ENCODE measurements at regions of chr6 and their contacts with region 1.

Region 1: GRCh38 chr6:156776840-156777576 is at the start of gene ARID1B:
- DNase-seq: peak; percentile 87 to 93 (median 89)
- ATAC-seq: peak; percentile 62 to 85 (median 81)
- H3K4me3 ChIP-seq: peak within 1 kb of the TSS; percentile 67 to 97 (median 80)
- H3K27ac ChIP-seq: peak within 1 kb of the TSS; percentile 96 to 99 (median 98)
- H3K4me1 ChIP-seq: peaks cover 0 to 47% (median 30%) of the 10 kb centered on the region in 12 donors
- H3K27me3 ChIP-seq: no peaks in the 10 kb centered on the region
- CTCF ChIP-seq: no peak
- POLR2A ChIP-seq: peak in 1 of 2 donors; percentile 56
- total RNA-seq, gene ARID1B: 34.3 to 76.1 (median 53.9) TPM

Region 2: DNA sequence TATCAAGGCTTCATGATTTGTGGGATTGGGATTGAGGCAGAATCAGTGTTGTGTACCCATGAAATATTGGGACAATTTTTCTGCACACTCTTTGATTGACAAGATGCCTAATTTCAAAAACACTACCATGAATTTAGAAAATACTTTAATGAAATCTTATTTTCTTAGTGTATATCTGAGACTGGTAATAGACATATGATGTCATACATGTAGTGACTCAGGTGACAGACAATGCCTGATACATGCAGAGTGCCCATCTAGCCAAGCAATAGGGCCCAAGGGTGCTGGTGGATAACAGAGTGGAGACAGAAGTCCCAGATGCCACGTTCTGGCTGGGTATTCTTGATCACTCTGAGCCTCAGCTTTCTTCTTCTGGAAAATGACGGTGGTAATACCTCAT is 279.4 kb before region 1 on chr6:
- intact Hi-C with region 1: no loop called
- DNase-seq: no peak
- ATAC-seq: no peak
- H3K4me3 ChIP-seq: no peak overlapping the region
- H3K27ac ChIP-seq: no peak overlapping the region
- H3K4me1 ChIP-seq: no peaks in the 10 kb centered on the region
- H3K27me3 ChIP-seq: no peaks in the 10 kb centered on the region
- CTCF ChIP-seq: no peak
- POLR2A ChIP-seq: no peak

Region 3: DNA sequence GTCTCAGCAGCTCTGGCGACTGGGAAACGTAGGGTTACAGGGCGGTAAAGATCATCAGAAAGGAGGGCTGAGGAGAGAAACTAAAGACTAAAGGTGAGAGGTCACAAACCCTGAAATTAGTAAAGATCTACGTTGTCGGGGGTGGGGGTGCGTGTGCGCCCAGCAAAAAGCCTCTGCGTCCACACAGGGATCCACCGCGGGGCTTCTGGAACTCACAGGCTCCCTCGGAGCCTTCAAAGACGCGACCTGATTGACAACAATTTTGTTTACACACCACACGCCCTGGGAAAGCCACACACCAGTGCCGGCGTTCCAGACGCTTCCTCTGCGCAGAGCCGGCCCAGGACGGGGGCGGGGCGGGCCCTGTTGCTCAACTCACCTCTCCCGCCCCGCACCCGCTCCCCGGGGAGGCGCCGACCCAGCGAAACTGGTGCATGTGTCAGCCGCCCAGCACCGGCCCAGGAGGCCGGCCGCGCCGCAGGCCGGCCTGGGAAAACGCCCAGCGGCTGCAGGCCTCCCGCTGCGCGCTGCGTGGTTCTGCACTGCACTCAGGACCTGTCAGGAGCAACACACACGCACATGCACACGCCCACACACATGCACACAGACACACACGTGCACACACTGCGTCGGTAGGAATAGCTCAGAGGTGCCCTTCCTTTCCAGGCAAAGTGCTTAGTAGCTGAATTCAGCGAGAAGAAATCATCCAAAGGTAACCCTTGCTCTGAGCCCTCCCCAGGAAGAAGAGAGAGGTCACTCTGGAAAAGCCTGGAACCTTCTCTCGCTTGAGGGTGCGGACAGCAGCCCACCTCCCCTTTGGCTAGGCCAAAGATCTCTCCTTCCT is 57.1 kb before region 1 on chr6:
- intact Hi-C with region 1: loop called in 4 of 10 experiments (anchors 2 kb)
- DNase-seq: peak; percentile 94 to 98 (median 96)
- ATAC-seq: peak; percentile 96 to 100 (median 99)
- H3K4me3 ChIP-seq: peak overlapping the region in 10 of 12 donors; percentile 2 to 60 (median 44)
- H3K27ac ChIP-seq: peak overlapping the region; percentile 78 to 95 (median 88)
- H3K4me1 ChIP-seq: peaks cover 6 to 26% (median 21%) of the 10 kb centered on the region in 12 donors
- H3K27me3 ChIP-seq: no peaks in the 10 kb centered on the region
- CTCF ChIP-seq: peak in 1 of 12 donors; percentile 11
- POLR2A ChIP-seq: peak in 1 of 2 donors; percentile 39

Region 4: GRCh38 chr6:156848533-156848932 is 71.5 kb after region 1 on chr6:
- intact Hi-C with region 1: loop called in 6 of 10 experiments (anchors 2 to 10 kb)
- DNase-seq: peak; percentile 85 to 91 (median 88)
- ATAC-seq: peak; percentile 82 to 91 (median 84)
- H3K4me3 ChIP-seq: peak overlapping the region in 4 of 12 donors; percentile 1 to 15 (median 8)
- H3K27ac ChIP-seq: peak overlapping the region; percentile 7 to 77 (median 64)
- H3K4me1 ChIP-seq: peaks cover 16 to 100% (median 90%) of the 10 kb centered on the region in 12 donors
- H3K27me3 ChIP-seq: no peaks in the 10 kb centered on the region
- CTCF ChIP-seq: no peak
- POLR2A ChIP-seq: no peak

Region 5: GRCh38 chr6:156933201-156934068 is 156.4 kb after region 1 on chr6:
- intact Hi-C with region 1: loop called in 2 of 10 experiments (anchors 5 kb)
- DNase-seq: peak in 1 of 5 donors; percentile 49
- ATAC-seq: peak; percentile 61 to 86 (median 74)
- H3K4me3 ChIP-seq: no peak overlapping the region
- H3K27ac ChIP-seq: peak overlapping the region in 10 of 12 donors; percentile 4 to 58 (median 40)
- H3K4me1 ChIP-seq: peaks cover 3 to 65% (median 24%) of the 10 kb centered on the region in 12 donors
- H3K27me3 ChIP-seq: no peaks in the 10 kb centered on the region
- CTCF ChIP-seq: peak in 6 of 12 donors; percentile 14 to 41 (median 20)
- POLR2A ChIP-seq: no peak

Region 6: DNA sequence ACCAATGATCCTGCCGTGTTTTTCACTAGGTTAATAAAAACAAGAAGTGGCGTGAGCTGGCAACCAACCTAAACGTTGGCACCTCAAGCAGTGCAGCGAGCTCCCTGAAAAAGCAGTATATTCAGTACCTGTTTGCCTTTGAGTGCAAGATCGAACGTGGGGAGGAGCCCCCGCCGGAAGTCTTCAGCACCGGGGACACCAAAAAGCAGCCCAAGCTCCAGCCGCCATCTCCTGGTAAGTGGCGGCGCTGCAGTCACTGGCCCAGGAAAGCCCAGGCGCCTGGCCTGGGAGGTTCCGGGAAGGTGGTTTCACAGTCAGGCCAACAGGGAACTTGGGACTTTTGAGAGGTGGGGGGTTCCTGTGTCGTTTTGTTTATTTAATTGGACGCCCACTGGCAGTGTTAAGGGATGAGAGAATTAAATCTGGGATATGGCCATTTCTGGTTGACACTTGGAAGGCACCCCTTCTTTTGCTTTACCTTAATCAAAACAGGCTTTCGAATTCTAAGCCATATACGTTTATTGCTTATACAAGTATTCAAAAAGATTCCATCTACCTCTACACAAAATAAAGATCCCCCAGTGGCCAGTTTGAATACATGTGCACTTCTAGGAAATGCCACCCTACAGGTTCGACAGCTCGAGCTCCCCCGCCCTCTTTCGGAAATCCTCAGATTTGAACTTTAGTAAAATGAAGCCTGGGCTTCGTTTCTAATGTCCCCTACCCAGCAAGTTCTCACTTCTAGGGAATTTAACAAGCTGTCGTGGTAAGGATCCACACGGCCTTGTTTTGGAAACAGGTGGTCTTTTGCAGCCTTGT is 407.4 kb after region 1 on chr6:
- intact Hi-C with region 1: loop called in 5 of 10 experiments (anchors 5 to 10 kb)
- DNase-seq: peak; percentile 58 to 79 (median 73)
- ATAC-seq: peak; percentile 23 to 81 (median 76)
- H3K4me3 ChIP-seq: peak overlapping the region in 2 of 12 donors; percentile 35 to 41
- H3K27ac ChIP-seq: no peak overlapping the region
- H3K4me1 ChIP-seq: peaks cover 0 to 38% (median 14%) of the 10 kb centered on the region in 12 donors
- H3K27me3 ChIP-seq: no peaks in the 10 kb centered on the region
- CTCF ChIP-seq: peak; percentile 69 to 95 (median 90)
- POLR2A ChIP-seq: no peak